AG04449 (cell line): ENCODE measurements at regions of chr2 and their contacts with region 1.

Region 1: DNA sequence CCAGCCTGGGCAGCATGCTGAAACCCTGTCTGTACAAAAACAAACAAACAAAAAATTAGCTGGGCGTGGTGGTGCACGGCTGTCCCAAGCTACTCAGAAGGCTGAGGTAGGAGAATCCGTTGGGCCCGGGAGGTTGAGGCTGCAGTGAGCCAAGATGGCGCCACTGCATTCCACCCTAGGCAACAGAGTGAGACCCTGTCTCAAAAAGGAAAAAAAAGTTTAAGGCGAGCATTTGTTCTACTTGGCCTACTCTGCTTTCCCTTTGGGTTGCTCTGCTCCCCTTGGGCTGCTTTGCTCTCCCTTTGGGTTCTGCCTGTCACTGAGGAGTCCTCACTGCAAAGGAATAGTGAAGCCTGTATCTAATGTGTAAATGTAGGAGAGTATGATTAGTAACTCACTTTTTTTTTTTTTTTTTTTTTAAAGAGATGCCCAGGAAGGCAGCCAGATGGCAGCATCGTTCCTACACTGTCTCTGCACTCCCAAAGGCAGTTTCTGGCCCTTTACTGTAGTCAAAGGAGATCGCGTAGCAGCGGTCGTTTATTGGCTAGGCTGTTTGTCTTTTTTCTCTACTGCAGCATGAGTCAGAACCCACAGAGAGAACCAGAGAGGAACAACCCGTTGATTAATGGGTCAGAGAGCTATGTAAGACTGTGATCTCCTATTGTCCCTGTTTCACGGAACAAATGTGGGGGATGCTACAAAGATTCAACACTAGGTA is 118.3 kb upstream of the CWC22 start:
- DNase-seq: peak; percentile 82
- H3K4me3 ChIP-seq: no peak overlapping the region
- CTCF ChIP-seq: peak; percentile 57

Region 2: GRCh38 chr2:180980106-180980942 is 854.9 kb after region 1 on chr2 and contains the start of gene UBE2E3:
- CTCF ChIA-PET with region 1: interaction called, 19 read pairs
- POLR2A ChIA-PET with region 1: interaction called, 3 read pairs
- DNase-seq: no peak
- H3K4me3 ChIP-seq: peak within 1 kb of the TSS; percentile 77
- CTCF ChIP-seq: peak; percentile 87

Region 3: DNA sequence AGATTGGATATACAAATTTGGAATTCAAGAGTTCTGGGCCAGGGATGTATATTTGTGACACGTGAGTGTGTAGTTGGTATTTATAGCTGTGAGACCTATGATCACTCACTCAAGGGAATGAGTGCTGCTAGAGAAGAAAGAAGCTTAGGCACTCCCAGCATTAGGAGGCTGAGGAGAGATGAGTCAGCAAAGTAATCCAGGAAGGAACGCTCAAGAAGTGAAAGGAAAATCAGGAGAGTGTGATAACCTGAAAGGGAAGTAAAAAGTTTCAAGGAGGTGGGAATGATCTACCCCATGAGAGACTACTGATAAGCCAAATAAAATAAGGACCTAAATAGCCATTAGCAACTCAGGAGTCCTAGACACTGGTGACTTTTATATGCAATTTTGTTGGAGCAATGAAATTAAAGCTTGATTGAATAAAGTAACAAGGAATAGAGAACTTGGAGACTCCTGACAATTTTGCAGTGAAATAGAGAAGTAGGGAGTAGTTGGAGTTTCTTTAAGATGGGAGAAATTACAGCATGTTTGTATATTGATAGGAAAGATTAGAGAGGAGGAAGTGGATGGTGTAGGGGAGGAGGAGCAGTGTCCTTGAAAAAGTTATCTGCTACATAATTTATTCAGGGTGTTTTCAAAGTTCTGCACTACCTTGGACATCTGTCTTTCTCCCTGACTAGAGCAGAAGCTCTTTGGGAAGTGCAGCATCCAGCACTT is 944.9 kb after region 1 on chr2:
- CTCF ChIA-PET with region 1: interaction called, 12 read pairs
- POLR2A ChIA-PET with region 1: no interaction called
- DNase-seq: no peak
- H3K4me3 ChIP-seq: no peak overlapping the region
- CTCF ChIP-seq: no peak

Region 4: DNA sequence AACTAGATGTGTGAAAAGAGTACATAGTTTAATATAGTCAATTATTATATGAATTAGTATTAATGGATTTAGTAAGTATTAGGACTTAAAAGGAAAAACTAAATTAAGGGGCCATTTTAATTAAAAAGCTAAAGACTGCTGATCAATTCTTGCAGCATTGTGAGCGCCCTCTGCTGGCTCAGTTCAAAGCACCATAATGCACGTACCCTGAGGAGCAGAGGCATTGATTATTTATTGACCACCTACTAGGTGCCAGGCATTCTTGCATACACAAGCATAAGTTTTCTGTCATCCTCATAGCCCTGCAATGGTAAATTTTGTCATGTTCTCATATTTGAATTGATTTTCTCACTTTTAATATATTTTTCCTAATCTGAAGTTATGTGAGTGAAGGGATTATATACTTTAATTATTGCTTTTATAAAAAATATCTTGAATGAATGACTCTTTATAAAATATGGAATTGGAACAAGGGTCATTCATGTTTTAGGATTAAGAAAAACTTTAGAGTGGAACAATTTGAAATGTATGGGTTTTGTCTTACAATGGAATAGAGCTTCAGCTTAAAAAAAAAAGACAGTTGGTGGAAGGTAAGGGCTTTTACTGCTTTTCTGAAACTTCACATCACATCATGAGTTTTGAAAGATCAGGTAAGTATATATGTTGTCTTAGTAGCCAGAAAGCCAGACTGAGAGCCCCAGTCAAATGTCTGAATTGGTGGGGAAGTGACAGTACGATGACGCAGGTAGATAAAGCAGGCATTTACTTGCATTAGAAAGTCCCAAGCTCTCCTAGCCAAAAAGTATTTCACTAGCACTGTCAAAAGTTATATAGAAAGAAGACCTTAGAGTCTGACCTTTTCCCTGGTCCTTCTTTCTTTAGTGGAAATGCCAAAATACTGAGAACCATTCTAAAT is 1341.5 kb after region 1 on chr2:
- CTCF ChIA-PET with region 1: interaction called, 41 read pairs
- POLR2A ChIA-PET with region 1: no interaction called
- DNase-seq: no peak
- H3K4me3 ChIP-seq: no peak overlapping the region
- CTCF ChIP-seq: peak; percentile 69

Region 5: GRCh38 chr2:182077451-182078142 is 1952.2 kb after region 1 on chr2:
- CTCF ChIA-PET with region 1: interaction called, 17 read pairs
- POLR2A ChIA-PET with region 1: no interaction called
- DNase-seq: peak; percentile 84
- H3K4me3 ChIP-seq: no peak overlapping the region
- CTCF ChIP-seq: peak; percentile 46